ENCODE measurements at regions of chr5 and their contacts with region 1.

Region 1: GRCh38 chr5:134586866-134587524 is 45.6 kb downstream of the SAR1B start:
- DNase-seq: peak; percentile 75 to 89 (median 86)
- H3K4me3 ChIP-seq: no peak overlapping the region
- H3K27ac ChIP-seq: no peak overlapping the region
- H3K4me1 ChIP-seq: no peaks in the 10 kb centered on the region
- H3K27me3 ChIP-seq: no peaks in the 10 kb centered on the region
- CTCF ChIP-seq: peak in 2 of 3 donors; percentile 66 to 81
- EP300 ChIP-seq: no peak
- POLR2A ChIP-seq: no peak

Region 2: GRCh38 chr5:133404724-133405123 is 1182.3 kb before region 1 on chr5:
- intact Hi-C with region 1: no loop called
- DNase-seq: no peak
- H3K4me3 ChIP-seq: no peak overlapping the region
- H3K27ac ChIP-seq: no peak overlapping the region
- H3K4me1 ChIP-seq: no peaks in the 10 kb centered on the region
- H3K27me3 ChIP-seq: no peaks in the 10 kb centered on the region
- CTCF ChIP-seq: no peak
- EP300 ChIP-seq: no peak
- POLR2A ChIP-seq: no peak

Region 3: DNA sequence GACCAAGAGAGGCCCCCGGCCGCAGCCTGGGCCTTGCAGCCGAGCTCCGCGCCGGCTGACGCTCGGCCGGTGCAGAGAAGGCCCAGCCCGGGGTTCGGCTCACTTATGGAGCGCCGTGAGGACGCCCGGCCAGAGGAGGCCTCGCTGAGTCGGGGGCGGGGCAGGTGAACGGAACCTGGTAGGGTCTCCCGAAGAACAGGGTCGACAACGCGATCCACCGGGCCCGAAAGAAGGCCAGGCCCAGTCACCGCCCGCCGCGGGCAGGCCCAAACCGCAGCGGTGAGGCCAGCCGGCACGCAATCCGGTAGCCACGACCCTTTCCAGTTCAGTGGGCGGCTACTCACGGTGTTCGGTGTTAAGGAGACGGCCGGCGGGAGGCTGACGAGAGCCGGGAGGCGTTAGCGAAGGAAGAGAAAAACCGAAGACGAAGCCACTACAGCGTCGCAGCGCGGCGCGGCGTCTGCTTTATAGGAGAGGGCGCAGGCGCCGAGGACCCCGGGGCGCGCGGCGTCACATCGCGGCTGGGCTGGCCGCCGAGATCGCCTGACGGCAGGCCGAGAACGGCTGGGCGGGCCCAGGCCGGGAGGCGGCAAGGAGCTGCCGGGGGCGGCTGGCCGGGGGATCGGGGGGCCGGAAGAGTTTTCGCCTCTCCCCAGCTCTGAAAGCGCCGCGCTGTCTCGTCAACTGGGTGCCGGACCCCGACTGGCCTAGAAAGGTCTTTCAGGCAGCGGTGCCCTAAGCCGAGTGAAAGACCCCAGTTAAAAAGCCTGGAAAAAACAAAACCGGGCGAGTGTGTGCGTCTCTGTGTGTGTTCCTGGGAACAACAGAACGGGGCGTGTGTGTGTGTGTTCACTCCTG is 410.3 kb before region 1 on chr5 and contains the start of gene SKP1:
- intact Hi-C with region 1: loop called in 2 of 4 experiments (anchors 10 kb)
- DNase-seq: peak; percentile 81 to 92 (median 85)
- H3K4me3 ChIP-seq: peak within 1 kb of the TSS; percentile 90
- H3K27ac ChIP-seq: peak within 1 kb of the TSS; percentile 97 to 99
- H3K4me1 ChIP-seq: peaks cover 5% of the 10 kb centered on the region
- H3K27me3 ChIP-seq: no peaks in the 10 kb centered on the region
- CTCF ChIP-seq: peak in 1 of 3 donors; percentile 27
- EP300 ChIP-seq: no peak
- POLR2A ChIP-seq: peak; percentile 94
- total RNA-seq, gene SKP1: 263 to 464 (median 361) TPM

Region 4: DNA sequence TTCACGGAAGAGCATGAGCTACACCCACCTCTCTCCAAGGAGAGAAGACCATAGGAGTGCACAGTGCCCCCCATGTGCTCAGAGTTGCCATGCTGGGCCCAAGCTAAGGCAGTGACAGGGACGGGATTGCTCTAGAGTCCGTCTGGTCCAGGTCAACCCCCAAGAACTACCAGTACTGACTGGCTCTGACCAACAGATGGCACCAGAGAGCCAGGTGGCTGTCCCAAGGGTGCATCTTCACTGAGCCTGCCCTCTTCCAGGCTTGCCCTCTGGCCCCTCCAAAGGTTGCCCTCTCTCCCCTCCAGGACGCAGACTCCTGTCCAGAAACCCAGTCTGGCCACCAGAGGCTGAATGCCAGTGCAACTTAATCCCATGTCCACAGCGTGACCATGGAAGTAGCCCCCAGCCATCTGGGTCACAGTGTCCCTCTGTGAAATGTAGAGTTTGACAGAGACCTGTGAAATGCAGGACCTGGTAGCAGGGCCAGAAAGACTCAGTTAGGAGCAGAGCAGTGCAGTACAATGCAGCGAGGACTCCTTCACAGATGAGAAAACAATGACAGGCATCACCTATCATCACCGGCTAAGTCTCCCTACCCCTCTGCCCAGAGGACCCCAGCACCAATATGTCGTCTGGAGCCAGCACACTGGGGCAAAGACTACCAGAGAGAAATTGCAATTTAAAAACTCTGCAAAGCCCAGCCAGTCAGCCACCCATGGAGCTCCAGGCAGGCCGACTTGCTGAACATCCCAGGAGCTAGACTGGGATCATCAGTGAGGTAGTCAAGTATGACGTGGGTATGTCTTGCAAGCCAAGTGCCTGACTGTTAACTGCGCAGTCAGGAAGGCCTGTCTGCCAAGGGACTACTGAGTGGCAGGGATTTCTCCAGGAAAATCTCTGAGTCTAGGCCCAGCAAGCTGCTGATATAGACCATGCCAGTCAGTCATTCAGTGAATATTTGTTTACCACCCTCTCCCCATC is 402.6 kb before region 1 on chr5:
- intact Hi-C with region 1: loop called in 2 of 4 experiments (anchors 10 kb)
- DNase-seq: peak; percentile 62 to 76 (median 73)
- H3K4me3 ChIP-seq: no peak overlapping the region
- H3K27ac ChIP-seq: no peak overlapping the region
- H3K4me1 ChIP-seq: no peaks in the 10 kb centered on the region
- H3K27me3 ChIP-seq: no peaks in the 10 kb centered on the region
- CTCF ChIP-seq: peak; percentile 72 to 79 (median 77)
- EP300 ChIP-seq: no peak
- POLR2A ChIP-seq: no peak

Region 5: DNA sequence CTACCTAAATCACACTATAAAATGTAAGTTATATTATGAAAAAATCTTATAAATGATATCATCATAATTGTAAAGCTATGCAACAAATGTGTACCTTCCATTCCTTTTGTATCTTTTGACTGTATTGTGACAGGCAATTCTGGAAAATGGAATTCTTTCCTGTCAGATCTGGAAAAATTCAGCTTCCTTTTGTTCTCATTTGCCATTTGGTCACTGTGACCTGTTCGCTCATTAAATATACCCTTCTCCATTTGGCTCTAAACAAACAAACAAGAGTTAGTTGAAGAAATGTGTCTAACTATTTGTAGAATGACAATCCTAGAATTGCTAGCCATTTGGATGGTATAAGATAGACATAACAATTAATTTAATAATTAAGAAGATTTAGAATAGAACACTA is 282.7 kb before region 1 on chr5:
- intact Hi-C with region 1: loop called (anchors 2 to 10 kb)
- DNase-seq: no peak
- H3K4me3 ChIP-seq: no peak overlapping the region
- H3K27ac ChIP-seq: no peak overlapping the region
- H3K4me1 ChIP-seq: peaks cover 1% of the 10 kb centered on the region
- H3K27me3 ChIP-seq: no peaks in the 10 kb centered on the region
- CTCF ChIP-seq: no peak
- EP300 ChIP-seq: no peak
- POLR2A ChIP-seq: no peak

Region 6: DNA sequence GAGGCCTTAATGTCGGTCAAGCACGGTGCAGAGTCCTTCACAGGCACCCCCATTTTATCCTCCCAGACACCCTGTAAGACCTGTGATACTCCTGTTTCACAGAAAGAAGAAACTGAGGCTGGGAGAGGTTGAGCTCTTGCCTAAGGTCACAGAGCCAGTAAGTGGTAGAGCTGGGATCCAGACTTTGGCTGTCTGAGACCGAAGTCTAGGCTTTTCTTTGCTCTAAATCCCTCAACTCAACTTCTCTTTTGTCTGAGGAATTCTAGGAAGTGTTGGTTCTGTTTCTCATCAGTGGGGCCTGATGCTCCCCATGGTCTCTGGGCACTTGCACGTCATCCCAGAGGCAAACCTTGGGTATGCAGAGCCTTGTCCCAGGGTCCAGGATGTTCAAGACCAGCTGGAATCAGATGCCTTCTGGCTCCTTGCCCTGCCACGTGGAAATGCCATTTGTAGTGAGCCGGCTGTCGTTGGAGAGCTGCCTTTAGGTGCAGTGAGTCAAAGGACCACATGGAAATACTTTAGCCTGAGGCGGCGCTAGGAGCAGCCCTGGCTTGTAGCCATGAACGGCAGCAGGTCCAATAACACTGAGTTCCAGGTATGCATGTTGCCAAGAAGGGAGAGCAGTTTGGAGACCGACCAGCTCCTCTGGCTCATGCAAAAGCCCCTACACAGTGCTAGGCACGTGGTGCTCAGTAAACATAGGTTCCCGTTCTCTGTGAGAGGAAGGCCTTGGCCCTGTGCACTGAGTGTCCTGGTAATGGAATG is 851.0 kb after region 1 on chr5:
- intact Hi-C with region 1: no loop called
- DNase-seq: peak in 2 of 5 donors; percentile 33 to 36
- H3K4me3 ChIP-seq: no peak overlapping the region
- H3K27ac ChIP-seq: no peak overlapping the region
- H3K4me1 ChIP-seq: no peaks in the 10 kb centered on the region
- H3K27me3 ChIP-seq: no peaks in the 10 kb centered on the region
- CTCF ChIP-seq: no peak
- EP300 ChIP-seq: no peak
- POLR2A ChIP-seq: no peak